Panc1 (cell line): ENCODE measurements at regions of chr15 and their contacts with region 1.

Region 1: GRCh38 chr15:66369773-66370651 is 13.5 kb upstream of the TIPIN start:
- DNase-seq: peak; percentile 53
- ATAC-seq: peak; percentile 77
- H3K4me3 ChIP-seq: peak overlapping the region; percentile 19 to 31; a peak in 3 of 4 replicates
- H3K27ac ChIP-seq: peak overlapping the region; percentile 90
- H3K4me1 ChIP-seq: peaks cover 11% of the 10 kb centered on the region
- H3K27me3 ChIP-seq: no peaks in the 10 kb centered on the region
- CTCF ChIP-seq: no peak

Region 2: DNA sequence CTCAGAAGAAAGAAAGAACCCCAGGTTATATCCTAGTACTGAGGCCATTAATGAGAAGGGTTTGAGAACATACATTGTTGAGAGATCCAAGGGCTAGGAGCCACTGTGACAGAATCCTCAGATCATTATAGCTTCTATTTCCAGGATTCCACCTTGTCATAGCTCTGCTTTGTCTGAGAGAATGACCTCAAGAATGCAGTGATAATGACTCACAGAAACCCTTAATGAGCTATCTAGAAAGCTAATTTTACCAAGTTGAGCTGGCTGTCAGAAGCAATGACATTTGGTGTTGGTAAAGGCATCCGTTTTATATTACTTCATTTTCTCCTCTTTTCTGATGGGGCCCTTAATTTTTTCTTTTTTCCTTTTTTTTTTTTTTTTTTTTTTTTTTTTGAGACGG is 1971.4 kb before region 1 on chr15:
- CTCF ChIA-PET with region 1: interaction called, 11 read pairs
- POLR2A ChIA-PET with region 1: no interaction called
- in situ Hi-C with region 1: no loop called
- intact Hi-C with region 1: no loop called
- DNase-seq: no peak
- ATAC-seq: no peak
- H3K4me3 ChIP-seq: no peak overlapping the region
- H3K27ac ChIP-seq: no peak overlapping the region
- H3K4me1 ChIP-seq: no peaks in the 10 kb centered on the region
- H3K27me3 ChIP-seq: no peaks in the 10 kb centered on the region
- CTCF ChIP-seq: no peak